ENCODE measurements at regions of chr15 and their contacts with region 1.

Region 1: GRCh38 chr15:89057504-89058133 is 30.6 kb upstream of the ABHD2 start:
- DNase-seq: peak; percentile 87
- H3K4me3 Mint-ChIP-seq: no peak overlapping the region
- H3K27ac Mint-ChIP-seq: no peak overlapping the region
- H3K4me1 Mint-ChIP-seq: no peaks in the 10 kb centered on the region
- H3K27me3 Mint-ChIP-seq: no peaks in the 10 kb centered on the region
- CTCF ChIP-seq: peak; percentile 99

Region 2: DNA sequence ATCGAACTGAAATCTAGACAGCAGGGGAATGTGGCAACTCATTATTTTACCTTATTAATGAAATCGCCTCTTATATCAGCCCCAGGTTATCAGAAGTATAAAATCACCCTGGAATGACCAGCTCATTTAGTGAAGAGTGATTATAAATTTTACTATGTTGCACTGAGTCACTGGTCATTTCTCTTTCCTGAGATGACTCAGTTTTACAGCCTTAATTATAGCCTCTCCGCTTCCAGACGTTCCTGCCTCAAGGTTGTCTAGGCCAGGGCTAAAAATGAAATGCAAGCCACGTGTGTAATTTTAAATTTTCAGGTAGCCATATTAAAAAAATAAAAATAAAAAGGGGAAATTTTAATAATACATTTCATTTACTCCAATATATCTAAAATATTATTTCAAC is 544.4 kb before region 1 on chr15:
- CTCF ChIA-PET with region 1: no interaction called
- POLR2A ChIA-PET with region 1: no interaction called
- intact Hi-C with region 1: no loop called
- DNase-seq: no peak
- H3K4me3 Mint-ChIP-seq: no peak overlapping the region
- H3K27ac Mint-ChIP-seq: no peak overlapping the region
- H3K4me1 Mint-ChIP-seq: no peaks in the 10 kb centered on the region
- H3K27me3 Mint-ChIP-seq: no peaks in the 10 kb centered on the region
- CTCF ChIP-seq: no peak

Region 3: DNA sequence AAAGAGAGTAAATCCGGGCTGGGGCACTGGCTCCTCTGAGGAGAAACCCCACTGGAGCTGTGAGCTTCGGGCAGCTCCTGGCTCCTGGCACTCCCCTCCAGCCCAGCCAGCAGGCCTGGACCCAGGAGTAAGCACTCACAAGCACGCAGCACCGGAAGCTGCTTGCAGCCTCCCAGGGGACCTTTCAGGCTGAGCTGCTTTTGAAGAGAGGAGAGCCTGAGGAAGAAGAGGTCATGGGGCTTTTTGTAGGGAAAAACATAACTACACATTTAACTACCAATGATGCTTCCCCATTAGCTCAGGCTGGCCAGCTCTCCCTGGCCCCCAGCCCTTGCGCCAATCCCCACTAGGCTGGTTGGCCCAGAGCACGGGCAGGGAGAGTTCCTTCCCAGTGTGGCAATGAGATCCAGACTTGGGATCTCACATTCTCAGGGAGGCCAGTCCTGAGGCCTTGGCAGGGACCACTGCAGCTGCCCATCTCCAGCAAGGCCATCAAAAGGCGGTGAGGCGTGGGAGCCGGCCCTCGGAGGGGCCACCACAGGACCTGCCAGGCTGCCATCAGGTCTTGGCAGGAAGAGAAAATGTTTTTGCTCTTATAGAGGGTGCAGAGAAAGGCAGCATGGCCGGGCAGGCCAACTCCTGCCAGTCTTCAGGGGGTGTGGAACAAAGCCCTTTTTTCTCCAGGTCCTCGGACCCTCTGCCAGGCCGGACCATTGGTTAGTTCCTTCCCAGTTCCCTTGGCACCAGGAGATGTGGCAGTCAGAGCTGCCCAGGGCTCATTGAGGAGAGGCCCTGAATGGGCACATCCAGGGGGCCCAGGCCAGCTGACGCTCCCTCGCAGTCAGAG is 103.0 kb before region 1 on chr15:
- CTCF ChIA-PET with region 1: no interaction called
- POLR2A ChIA-PET with region 1: no interaction called
- intact Hi-C with region 1: no loop called
- DNase-seq: no peak
- H3K4me3 Mint-ChIP-seq: no peak overlapping the region
- H3K27ac Mint-ChIP-seq: no peak overlapping the region
- H3K4me1 Mint-ChIP-seq: no peaks in the 10 kb centered on the region
- H3K27me3 Mint-ChIP-seq: no peaks in the 10 kb centered on the region
- CTCF ChIP-seq: no peak

Region 4: GRCh38 chr15:89023311-89023961 is 34.2 kb before region 1 on chr15:
- CTCF ChIA-PET with region 1: interaction called, 13 read pairs
- POLR2A ChIA-PET with region 1: interaction called, 3 read pairs
- intact Hi-C with region 1: no loop called
- DNase-seq: peak; percentile 26
- H3K4me3 Mint-ChIP-seq: no peak overlapping the region
- H3K27ac Mint-ChIP-seq: no peak overlapping the region
- H3K4me1 Mint-ChIP-seq: no peaks in the 10 kb centered on the region
- H3K27me3 Mint-ChIP-seq: no peaks in the 10 kb centered on the region
- CTCF ChIP-seq: no peak

Region 5: GRCh38 chr15:89087830-89088604 is 30.4 kb after region 1 on chr15 and contains the start of gene ABHD2:
- CTCF ChIA-PET with region 1: interaction called, 65 read pairs
- POLR2A ChIA-PET with region 1: interaction called, 6 read pairs
- intact Hi-C with region 1: no loop called
- DNase-seq: peak; percentile 100
- H3K4me3 Mint-ChIP-seq: no peak within 1 kb of the TSS
- H3K27ac Mint-ChIP-seq: peak within 1 kb of the TSS; percentile 97
- H3K4me1 Mint-ChIP-seq: peaks cover 22% of the 10 kb centered on the region
- H3K27me3 Mint-ChIP-seq: no peaks in the 10 kb centered on the region
- CTCF ChIP-seq: no peak
- total RNA-seq, gene ABHD2: 47.7 and 55.9 TPM in 2 replicates

Region 6: DNA sequence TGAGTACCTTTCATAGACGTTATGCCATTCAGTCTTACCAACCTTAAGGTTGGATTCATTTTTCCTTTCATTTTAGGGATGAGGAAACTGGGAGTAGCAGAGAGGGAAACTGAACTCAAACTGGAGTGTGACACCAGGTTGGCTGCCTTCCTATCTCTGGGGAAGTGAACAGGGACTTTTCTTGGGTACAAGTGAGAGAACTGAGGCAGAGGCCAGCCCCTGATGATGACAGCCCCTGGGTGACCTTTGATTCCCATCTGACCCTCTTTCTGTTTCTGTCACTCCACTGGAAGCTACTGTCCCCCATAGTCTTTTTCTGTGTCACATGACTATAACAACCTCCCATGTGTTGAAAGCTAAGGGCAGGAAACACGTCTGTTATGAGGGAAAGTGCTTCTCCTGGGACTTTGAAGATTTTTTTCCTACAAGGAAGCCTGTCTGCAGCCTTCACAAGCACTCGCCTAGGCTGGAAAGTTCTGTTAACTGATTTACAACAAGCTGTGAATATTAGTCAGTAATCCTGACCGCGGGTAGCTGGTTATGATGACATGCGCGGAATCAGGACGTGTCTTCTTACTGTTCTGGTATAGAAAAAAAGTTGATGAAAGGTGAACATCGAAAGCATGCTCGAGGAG is 62.0 kb after region 1 on chr15:
- CTCF ChIA-PET with region 1: interaction called, 15 read pairs
- POLR2A ChIA-PET with region 1: interaction called, 3 read pairs
- intact Hi-C with region 1: no loop called
- DNase-seq: peak; percentile 66
- H3K4me3 Mint-ChIP-seq: no peak overlapping the region
- H3K27ac Mint-ChIP-seq: peak overlapping the region; percentile 91
- H3K4me1 Mint-ChIP-seq: peaks cover 47% of the 10 kb centered on the region
- H3K27me3 Mint-ChIP-seq: no peaks in the 10 kb centered on the region
- CTCF ChIP-seq: no peak

Region 7: GRCh38 chr15:89150287-89150686 is 92.7 kb after region 1 on chr15:
- CTCF ChIA-PET with region 1: interaction called, 14 read pairs
- POLR2A ChIA-PET with region 1: no interaction called
- intact Hi-C with region 1: no loop called
- DNase-seq: no peak
- H3K4me3 Mint-ChIP-seq: no peak overlapping the region
- H3K27ac Mint-ChIP-seq: no peak overlapping the region
- H3K4me1 Mint-ChIP-seq: no peaks in the 10 kb centered on the region
- H3K27me3 Mint-ChIP-seq: no peaks in the 10 kb centered on the region
- CTCF ChIP-seq: no peak

Region 8: DNA sequence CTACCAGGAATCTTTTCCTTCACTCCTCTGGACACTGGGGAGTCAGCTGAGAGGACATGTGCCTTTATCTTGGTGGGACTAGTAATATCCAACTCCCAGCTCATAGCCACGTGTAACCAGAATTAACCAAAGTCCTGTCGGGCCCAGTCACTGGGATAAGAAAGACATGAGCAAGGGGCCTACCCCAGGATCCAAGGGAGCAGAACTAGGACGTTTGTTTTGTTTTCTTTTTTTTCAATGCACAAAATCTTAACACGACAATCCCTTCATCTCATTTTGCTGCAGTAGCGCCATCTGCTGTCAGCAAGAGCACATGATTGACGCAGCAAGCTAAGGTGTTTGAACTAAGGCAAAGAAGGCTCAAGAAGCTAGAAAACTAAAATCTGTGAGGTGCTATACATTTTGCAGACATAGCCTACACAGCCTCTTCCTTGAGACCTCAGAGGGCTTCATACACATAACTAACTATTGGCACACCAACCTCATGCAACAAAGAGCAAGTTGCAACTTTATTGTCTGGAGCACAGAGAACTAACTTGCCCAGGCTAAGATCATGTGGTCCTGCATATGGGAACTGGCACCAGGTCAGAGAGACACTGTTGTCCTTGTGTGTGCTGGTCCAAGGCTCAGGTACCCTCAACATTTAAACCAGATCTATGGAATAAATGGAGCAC is 120.2 kb after region 1 on chr15:
- CTCF ChIA-PET with region 1: interaction called, 452 read pairs
- POLR2A ChIA-PET with region 1: interaction called, 3 read pairs
- intact Hi-C with region 1: loop called (anchors 1 kb)
- DNase-seq: peak; percentile 74
- H3K4me3 Mint-ChIP-seq: no peak overlapping the region
- H3K27ac Mint-ChIP-seq: no peak overlapping the region
- H3K4me1 Mint-ChIP-seq: peaks cover 7% of the 10 kb centered on the region
- H3K27me3 Mint-ChIP-seq: no peaks in the 10 kb centered on the region
- CTCF ChIP-seq: peak; percentile 66

Region 9: DNA sequence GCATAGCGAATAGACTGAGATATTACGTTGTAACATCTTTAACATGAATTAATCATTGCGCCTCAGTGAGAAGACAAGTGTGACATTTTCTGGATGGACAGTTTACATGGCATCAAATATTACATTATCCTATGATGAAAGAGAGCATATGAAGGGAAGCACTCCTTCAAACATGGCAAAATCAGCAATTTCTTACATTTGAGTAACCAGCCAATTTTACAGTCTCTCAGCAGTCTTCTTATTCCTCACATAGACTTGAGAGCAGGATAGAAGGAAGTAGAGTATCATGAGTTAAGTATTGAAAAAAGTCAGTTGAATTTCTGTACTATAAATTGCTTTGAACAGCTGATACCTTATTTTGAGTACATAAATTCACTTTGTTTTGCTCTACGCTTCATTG is 225.0 kb after region 1 on chr15:
- CTCF ChIA-PET with region 1: no interaction called
- POLR2A ChIA-PET with region 1: no interaction called
- intact Hi-C with region 1: no loop called
- DNase-seq: no peak
- H3K4me3 Mint-ChIP-seq: no peak overlapping the region
- H3K27ac Mint-ChIP-seq: no peak overlapping the region
- H3K4me1 Mint-ChIP-seq: no peaks in the 10 kb centered on the region
- H3K27me3 Mint-ChIP-seq: no peaks in the 10 kb centered on the region
- CTCF ChIP-seq: no peak

Measured in MCF 10A (cell line).